ENCODE measurements at regions of chr5 and their contacts with region 1.

Region 1: DNA sequence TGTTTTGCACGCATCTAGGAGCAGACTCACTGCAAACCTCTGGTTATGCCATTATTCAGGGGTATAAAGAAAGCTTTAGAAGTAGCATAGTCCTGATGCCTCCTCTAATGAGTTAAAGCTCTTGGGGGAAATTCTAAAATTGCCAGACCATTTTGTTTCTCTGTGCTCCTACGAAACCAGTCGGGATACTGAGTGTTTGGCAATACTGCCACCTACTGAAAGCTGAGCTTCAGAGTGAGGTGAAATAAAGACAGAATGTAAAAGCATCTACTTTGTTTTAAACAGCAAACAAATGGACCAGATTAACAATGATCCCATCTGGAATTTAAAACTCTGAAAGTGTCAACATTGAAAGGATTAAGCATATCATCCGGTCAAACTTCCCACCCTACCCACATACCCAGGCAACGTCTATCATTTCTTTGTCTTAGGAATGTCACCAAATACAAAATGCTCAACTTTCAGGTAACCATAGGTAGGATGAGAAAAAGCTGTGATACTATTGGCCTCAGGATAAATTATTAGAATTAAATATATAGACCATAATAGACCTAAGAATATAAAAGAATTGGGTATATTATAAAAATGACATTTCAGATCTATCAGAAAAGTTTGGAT is 77.8 kb upstream of the SHISAL2B start:
- DNase-seq: no peak
- ATAC-seq: peak in 1 of 2 donors; percentile 61
- H3K4me3 ChIP-seq: no peak overlapping the region
- H3K27ac ChIP-seq: no peak overlapping the region
- H3K4me1 ChIP-seq: peaks cover 0 to 3% of the 10 kb centered on the region in 2 donors
- H3K27me3 ChIP-seq: no peaks in the 10 kb centered on the region
- CTCF ChIP-seq: peak in 4 of 5 experiments; percentile 34 to 62 (median 54)
- POLR2A ChIP-seq: no peak

Region 2: GRCh38 chr5:64147849-64148441 is 464.5 kb before region 1 on chr5:
- in situ Hi-C with region 1: loop called (anchors 5 to 25 kb)
- intact Hi-C with region 1: loop called (anchors 2 kb)
- DNase-seq: peak; percentile 16 to 25
- ATAC-seq: peak in 1 of 2 donors; percentile 65
- H3K4me3 ChIP-seq: no peak overlapping the region
- H3K27ac ChIP-seq: no peak overlapping the region
- H3K4me1 ChIP-seq: peaks cover 3 to 4% of the 10 kb centered on the region in 2 donors
- H3K27me3 ChIP-seq: no peaks in the 10 kb centered on the region
- CTCF ChIP-seq: peak; percentile 62 to 77 (median 71)
- POLR2A ChIP-seq: no peak

Region 3: GRCh38 chr5:64221911-64222310 is 390.5 kb before region 1 on chr5:
- in situ Hi-C with region 1: loop called in 1 of 4 experiments (anchors 5 kb)
- intact Hi-C with region 1: no loop called
- DNase-seq: no peak
- ATAC-seq: no peak
- H3K4me3 ChIP-seq: no peak overlapping the region
- H3K27ac ChIP-seq: no peak overlapping the region
- H3K4me1 ChIP-seq: no peaks in the 10 kb centered on the region
- H3K27me3 ChIP-seq: no peaks in the 10 kb centered on the region
- CTCF ChIP-seq: no peak
- POLR2A ChIP-seq: no peak

Region 4: GRCh38 chr5:64229163-64229774 is 383.2 kb before region 1 on chr5:
- in situ Hi-C with region 1: loop called in 3 of 4 experiments (anchors 5 to 10 kb)
- intact Hi-C with region 1: loop called (anchors 1 kb)
- DNase-seq: no peak
- ATAC-seq: no peak
- H3K4me3 ChIP-seq: no peak overlapping the region
- H3K27ac ChIP-seq: no peak overlapping the region
- H3K4me1 ChIP-seq: no peaks in the 10 kb centered on the region
- H3K27me3 ChIP-seq: no peaks in the 10 kb centered on the region
- CTCF ChIP-seq: peak in 3 of 5 experiments; percentile 43 to 63 (median 63)
- POLR2A ChIP-seq: no peak

Region 5: DNA sequence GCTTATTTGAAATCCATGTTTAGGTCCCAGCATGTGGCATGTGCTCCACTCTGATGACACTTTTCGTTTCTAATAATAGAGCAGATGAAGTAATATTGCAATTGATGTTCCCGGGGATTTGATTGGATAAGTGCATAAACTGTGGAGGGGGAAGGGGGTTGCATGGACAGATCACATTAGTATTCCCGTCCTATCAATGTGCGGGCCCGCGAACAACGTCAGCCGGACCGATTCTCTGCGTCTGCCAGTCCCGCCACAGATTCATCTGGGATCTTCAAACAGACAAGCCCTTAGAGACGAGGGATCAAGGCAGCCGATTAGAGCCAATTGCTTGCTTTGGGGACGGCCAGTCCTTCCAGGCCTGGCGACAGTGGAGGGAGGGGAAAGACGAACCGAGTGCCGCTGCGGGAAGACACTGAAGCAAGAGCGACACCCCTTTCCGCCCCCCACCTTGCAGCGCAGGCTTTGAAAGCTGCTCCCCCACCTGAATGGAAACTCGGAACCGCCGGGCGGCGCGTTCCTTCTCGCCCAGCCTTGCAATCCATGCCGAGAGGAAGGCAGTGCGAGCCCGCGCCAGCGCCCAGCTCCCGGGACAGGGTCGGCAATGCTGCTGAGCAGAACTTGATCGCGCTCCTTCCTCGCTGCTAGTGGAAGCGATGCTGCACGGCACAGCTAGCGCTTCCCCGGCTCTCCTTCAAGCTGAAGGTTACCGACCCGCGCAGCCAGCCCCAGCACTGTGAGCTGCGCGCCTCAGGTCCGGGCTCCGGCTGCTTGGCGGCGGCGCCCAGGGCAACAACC is 106.5 kb before region 1 on chr5 and contains the start of gene RGS7BP:
- in situ Hi-C with region 1: no loop called
- intact Hi-C with region 1: loop called (anchors 2 kb)
- DNase-seq: no peak
- ATAC-seq: peak; percentile 39 to 55
- H3K4me3 ChIP-seq: peak within 1 kb of the TSS; percentile 55 to 65 (median 57)
- H3K27ac ChIP-seq: peak within 1 kb of the TSS in 1 of 4 donors; percentile 19
- H3K4me1 ChIP-seq: peaks cover 5 to 10% of the 10 kb centered on the region in 2 donors
- H3K27me3 ChIP-seq: peaks cover 0 to 3% (median 0%) of the 10 kb centered on the region in 3 donors
- CTCF ChIP-seq: no peak
- POLR2A ChIP-seq: no peak
- total RNA-seq, gene RGS7BP: 0.10 to 0.86 (median 0.47) TPM